ENCODE measurements at regions of chr17 and their contacts with region 1.

Region 1: DNA sequence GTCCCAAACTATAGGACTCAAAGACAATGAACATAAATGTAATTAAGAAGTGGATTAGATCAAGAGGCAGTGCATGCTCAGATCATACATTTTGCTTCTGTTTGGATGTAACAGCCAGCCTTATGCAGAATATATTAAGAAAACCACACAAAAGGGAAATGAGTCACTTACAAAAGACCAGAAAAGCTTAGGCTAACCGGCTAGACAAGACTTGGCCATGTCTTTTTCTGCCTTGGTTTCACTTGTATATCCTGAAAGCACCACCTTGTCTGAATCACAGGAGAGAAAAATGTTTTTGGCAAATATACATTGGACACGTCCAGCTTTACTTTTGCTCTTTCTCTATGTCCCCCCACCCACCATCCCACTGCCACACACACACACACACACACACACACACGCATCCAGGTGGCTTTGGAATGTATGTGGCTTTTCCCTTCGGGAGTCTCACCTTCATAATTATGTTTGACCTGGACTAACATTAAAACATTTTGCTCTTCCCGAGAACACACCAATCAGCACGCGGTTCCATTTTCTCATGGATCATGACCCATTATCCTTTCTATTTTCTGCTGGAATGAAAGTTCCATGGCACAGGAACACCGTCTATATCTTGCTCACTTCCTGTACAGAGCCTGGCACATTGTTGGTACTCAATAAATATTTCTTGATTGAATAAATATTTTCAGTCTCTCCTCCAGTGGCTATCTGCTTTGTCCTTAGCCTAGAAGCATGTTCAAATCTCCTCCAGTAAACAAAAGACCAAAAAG is 64.6 kb downstream of the CDK5R1 start:
- DNase-seq: peak; percentile 76
- H3K4me3 Mint-ChIP-seq: peak overlapping the region; percentile 18
- H3K27ac Mint-ChIP-seq: peak overlapping the region; percentile 68
- H3K4me1 Mint-ChIP-seq: peaks cover 43% of the 10 kb centered on the region
- H3K27me3 Mint-ChIP-seq: no peaks in the 10 kb centered on the region

Region 2: DNA sequence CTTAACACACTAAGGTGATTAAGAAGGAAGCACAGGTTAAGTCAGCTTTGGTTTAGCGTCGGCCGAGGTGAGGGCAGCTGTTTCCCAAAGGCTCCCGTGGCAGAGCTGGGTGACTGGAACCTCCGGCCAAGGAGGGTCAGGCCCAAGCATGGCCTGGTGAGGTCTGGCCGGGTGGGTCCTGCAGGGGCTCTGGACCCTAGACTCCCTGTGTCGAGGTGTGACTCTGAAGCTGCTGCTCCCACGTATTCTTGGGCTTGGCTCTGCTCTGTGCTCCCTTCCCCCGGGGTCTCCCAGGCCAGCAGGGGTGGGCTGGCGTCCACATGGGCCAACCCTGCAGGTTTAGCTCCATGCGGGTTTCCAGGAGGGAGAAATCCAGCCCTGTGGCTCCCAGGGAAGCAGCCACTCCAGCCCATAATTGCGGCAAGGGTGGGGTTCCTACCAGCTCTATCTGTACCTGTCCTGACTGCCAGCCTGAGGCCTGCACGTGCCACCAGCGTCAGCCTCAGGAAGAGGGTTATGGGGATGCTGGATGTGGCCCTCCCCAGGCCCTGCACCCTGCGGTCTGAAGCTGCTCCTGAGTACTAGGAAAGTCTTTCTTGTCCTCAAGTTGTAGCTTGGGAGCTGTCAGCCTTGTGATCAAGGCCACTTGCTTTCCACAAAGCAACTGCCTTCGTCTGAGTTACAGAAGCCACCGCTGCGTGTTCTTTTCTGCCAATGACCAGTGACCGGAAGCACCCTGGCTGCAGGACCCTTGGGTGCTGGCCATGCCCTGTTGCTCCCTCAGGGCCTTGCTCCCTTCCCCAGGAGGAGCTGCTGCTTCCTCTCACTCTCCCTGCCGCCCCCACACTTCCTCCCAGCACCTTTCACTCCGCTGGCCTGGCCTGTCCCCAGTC is 59.8 kb before region 1 on chr17:
- intact Hi-C with region 1: loop called (anchors 1 kb)
- DNase-seq: peak; percentile 74
- H3K4me3 Mint-ChIP-seq: peak overlapping the region; percentile 51
- H3K27ac Mint-ChIP-seq: peak overlapping the region; percentile 1
- H3K4me1 Mint-ChIP-seq: peaks cover 44% of the 10 kb centered on the region
- H3K27me3 Mint-ChIP-seq: no peaks in the 10 kb centered on the region

Region 3: DNA sequence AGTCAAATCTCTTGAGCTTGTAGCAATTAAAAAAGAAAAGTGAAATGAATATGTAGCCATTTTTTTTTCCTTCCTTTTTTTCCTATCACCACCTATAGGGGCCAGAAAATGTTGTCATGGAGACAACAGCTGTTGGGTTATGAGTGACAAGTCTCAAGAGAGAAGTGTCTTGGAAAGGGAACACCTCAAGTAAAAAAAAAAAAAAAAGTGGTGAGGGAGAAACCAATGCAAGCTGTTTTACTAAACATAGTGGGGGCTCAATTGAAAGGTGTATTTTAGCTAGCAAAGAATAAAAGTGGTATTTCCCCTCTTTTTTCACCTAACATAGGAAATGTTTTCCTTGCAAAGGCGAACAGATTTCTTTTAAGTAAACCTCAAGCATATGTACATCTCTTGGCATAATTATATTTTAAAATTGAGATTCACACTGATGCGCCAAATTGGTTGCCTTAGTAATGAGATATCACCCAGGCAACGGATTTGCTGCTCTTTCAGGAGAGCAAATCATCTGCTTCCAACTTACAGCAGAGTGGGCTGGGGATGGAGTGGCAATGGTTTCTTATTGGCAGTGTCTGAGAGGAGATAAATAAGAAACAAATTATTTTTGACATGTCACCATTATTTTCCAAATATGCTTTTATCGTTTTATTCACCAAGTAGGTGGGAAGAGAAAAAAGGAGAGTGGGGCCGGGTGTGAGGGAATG is 142.0 kb after region 1 on chr17:
- intact Hi-C with region 1: no loop called
- DNase-seq: no peak
- H3K4me3 Mint-ChIP-seq: no peak overlapping the region
- H3K27ac Mint-ChIP-seq: no peak overlapping the region
- H3K4me1 Mint-ChIP-seq: no peaks in the 10 kb centered on the region
- H3K27me3 Mint-ChIP-seq: no peaks in the 10 kb centered on the region

Measured in activated CD4-positive, alpha-beta T cell treated with anti-CD3 and anti-CD28 coated beads, Interleukin-2, amount 10 ng/mL, durations not matched to agents 24 days and 14 days (primary cell).